CD4-positive, alpha-beta memory T cell (primary cell): ENCODE measurements at regions of chr11 and their contacts with region 1.

Region 1: GRCh38 chr11:132770829-132771515 is 761.3 kb downstream of the OPCML start:
- DNase-seq: no peak
- H3K4me3 ChIP-seq: no peak overlapping the region
- H3K4me3 Mint-ChIP-seq: no peak overlapping the region
- H3K27ac ChIP-seq: no peak overlapping the region
- H3K27ac Mint-ChIP-seq: no peak overlapping the region
- H3K4me1 ChIP-seq: no peaks in the 10 kb centered on the region
- H3K4me1 Mint-ChIP-seq: peaks cover 0 to 5% (median 0%) of the 10 kb centered on the region in 4 donors
- H3K27me3 ChIP-seq: no peaks in the 10 kb centered on the region
- H3K27me3 Mint-ChIP-seq: peaks cover 4 to 5% of the 10 kb centered on the region in 2 donors

Region 2: DNA sequence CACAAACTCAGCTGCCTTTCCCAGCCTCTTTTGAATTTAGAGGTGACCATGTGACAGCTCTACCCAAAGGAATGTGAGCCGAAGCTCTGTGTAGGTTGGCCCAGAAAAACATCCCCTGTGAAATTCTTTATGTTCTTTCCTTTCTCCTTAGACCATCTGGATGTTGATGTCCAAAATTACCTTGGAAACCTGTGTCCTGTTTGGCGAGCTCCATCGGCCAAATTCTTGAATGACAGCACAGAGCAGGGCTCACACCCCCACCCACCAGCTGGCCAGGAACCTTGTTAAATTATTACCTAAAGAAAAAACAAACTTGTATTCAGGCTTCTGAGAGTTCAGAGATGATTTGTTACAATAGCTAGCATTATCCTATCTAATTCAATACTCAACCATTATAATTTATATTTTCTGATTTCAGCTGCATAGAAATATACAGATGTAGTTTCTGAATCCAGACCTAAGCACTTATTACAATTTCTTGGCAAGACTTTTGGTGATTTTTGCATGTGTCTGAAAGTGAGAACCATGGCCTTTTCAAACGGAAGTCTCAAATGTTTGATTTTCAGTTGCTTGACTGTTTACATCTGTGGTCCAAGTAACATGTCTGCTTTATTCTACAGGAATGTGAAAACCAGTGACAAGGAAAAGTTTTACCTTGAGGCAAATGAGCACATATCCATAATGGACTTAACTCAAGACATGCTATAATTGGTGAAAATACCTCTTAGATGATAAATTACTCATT is 846.3 kb before region 1 on chr11:
- CTCF ChIA-PET with region 1: no interaction called
- POLR2A ChIA-PET with region 1: no interaction called
- intact Hi-C with region 1: loop called (anchors 10 kb)
- DNase-seq: no peak
- H3K4me3 ChIP-seq: no peak overlapping the region
- H3K4me3 Mint-ChIP-seq: no peak overlapping the region
- H3K27ac ChIP-seq: no peak overlapping the region
- H3K27ac Mint-ChIP-seq: no peak overlapping the region
- H3K4me1 ChIP-seq: no peaks in the 10 kb centered on the region
- H3K4me1 Mint-ChIP-seq: no peaks in the 10 kb centered on the region
- H3K27me3 ChIP-seq: no peaks in the 10 kb centered on the region
- H3K27me3 Mint-ChIP-seq: peaks cover 0 to 1% of the 10 kb centered on the region in 2 donors

Region 3: GRCh38 chr11:132874638-132875037 is 103.7 kb after region 1 on chr11:
- CTCF ChIA-PET with region 1: no interaction called
- POLR2A ChIA-PET with region 1: no interaction called
- intact Hi-C with region 1: no loop called
- DNase-seq: no peak
- H3K4me3 ChIP-seq: no peak overlapping the region
- H3K4me3 Mint-ChIP-seq: no peak overlapping the region
- H3K27ac ChIP-seq: no peak overlapping the region
- H3K27ac Mint-ChIP-seq: no peak overlapping the region
- H3K4me1 ChIP-seq: no peaks in the 10 kb centered on the region
- H3K4me1 Mint-ChIP-seq: no peaks in the 10 kb centered on the region
- H3K27me3 ChIP-seq: no peaks in the 10 kb centered on the region
- H3K27me3 Mint-ChIP-seq: peaks cover 0 to 1% of the 10 kb centered on the region in 2 donors

Region 4: DNA sequence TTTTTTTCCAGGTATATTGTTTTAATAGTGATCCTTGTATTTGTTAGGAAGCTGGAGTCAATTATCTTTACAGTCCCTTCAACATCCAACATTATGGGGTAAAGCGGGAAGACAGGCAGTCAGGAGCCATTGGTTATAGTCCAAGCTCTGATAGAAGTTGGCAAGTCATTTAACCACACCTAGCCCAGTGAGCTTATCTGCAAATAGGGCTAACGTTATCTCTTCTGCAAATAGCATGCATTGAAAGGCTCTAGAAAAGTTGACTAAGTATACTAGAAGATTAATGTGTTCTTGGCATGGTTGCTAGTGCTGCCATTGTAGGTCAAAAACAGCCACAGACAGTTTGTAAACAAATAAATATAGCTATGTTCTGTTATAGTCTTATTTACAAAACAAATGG is 240.6 kb after region 1 on chr11:
- CTCF ChIA-PET with region 1: no interaction called
- POLR2A ChIA-PET with region 1: no interaction called
- intact Hi-C with region 1: no loop called
- DNase-seq: no peak
- H3K4me3 ChIP-seq: no peak overlapping the region
- H3K4me3 Mint-ChIP-seq: no peak overlapping the region
- H3K27ac ChIP-seq: no peak overlapping the region
- H3K27ac Mint-ChIP-seq: no peak overlapping the region
- H3K4me1 ChIP-seq: no peaks in the 10 kb centered on the region
- H3K4me1 Mint-ChIP-seq: no peaks in the 10 kb centered on the region
- H3K27me3 ChIP-seq: no peaks in the 10 kb centered on the region
- H3K27me3 Mint-ChIP-seq: no peaks in the 10 kb centered on the region

Region 5: DNA sequence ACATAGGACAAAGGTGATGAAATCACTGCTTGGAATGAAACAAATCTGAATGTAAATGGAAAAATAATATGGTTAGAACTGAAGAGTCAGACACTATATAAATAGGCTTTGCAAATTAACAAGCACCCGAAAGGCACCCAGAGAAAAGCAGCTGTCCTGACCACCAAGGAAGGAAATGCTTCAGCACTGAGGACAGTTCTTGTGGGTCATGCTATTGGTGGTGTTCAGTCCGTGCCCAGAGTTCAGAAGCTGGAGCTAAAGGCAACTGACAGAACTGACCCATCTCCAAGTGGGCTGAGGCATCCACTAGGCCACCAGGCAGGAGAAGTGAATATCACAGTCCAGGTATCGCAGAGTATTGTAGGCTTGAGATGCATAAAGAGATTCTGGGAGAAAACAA is 552.4 kb after region 1 on chr11:
- CTCF ChIA-PET with region 1: no interaction called
- POLR2A ChIA-PET with region 1: no interaction called
- intact Hi-C with region 1: no loop called
- DNase-seq: no peak
- H3K4me3 ChIP-seq: no peak overlapping the region
- H3K4me3 Mint-ChIP-seq: no peak overlapping the region
- H3K27ac ChIP-seq: no peak overlapping the region
- H3K27ac Mint-ChIP-seq: no peak overlapping the region
- H3K4me1 ChIP-seq: no peaks in the 10 kb centered on the region
- H3K4me1 Mint-ChIP-seq: no peaks in the 10 kb centered on the region
- H3K27me3 ChIP-seq: no peaks in the 10 kb centered on the region
- H3K27me3 Mint-ChIP-seq: peaks cover 0 to 2% of the 10 kb centered on the region in 2 donors